ENCODE measurements at regions of chr12 and their contacts with region 1.

Region 1: DNA sequence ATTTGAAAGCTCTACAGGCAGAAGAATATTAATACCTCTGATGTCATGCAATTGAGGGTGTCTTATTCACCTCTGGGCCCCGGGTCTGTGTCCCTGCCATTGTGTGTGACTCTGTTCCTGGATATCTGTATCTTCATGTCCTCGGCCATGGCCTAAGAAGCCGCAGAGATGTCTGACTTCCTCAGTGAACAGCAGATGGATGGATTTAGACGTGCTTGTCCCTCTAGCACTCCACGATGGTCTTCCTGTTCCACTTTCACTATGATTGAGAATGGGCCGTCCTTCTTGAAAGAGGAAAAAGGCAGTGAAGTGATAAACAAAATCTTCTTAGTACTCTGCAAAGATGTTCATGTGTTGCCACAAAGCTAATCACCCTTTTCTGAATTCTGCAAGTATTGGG is 217.4 kb downstream of the SLC41A2 start:
- DNase-seq: no peak
- ATAC-seq: peak; percentile 65

Region 2: DNA sequence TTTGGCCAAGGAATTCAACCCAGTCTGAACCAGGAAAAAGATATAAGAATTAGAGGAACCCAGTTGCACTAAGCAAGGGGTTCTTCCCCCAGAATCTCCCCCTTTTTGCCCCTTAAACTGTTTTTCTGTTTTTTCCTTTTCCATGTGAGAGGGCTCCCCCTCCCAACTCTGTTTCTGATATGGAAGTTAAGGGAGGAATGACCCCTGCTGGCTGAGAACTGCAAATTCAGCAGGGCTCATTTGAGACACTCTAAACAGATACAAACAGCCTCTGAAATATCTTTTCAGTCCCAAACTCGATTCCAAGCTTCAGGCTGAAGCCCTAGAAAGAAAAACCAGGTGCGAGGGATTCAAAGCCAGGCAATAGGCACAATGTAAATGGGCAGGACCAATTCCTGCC is 84.7 kb after region 1 on chr12:
- intact Hi-C with region 1: no loop called
- DNase-seq: no peak
- ATAC-seq: no peak

Region 3: GRCh38 chr12:104877123-104877705 is 136.5 kb after region 1 on chr12:
- intact Hi-C with region 1: loop called (anchors 5 kb)
- DNase-seq: no peak
- ATAC-seq: peak; percentile 72